KBM-7 (cell line): ENCODE measurements at regions of chr15 and their contacts with region 1.

Region 1: GRCh38 chr15:101294731-101295606 is at the start of gene SNRPA1:
- DNase-seq: peak; percentile 95

Region 2: GRCh38 chr15:101008158-101009139 is 286.5 kb before region 1 on chr15:
- in situ Hi-C with region 1: no loop called
- DNase-seq: peak; percentile 63

Region 3: GRCh38 chr15:101242160-101242998 is 52.6 kb before region 1 on chr15:
- in situ Hi-C with region 1: no loop called
- DNase-seq: peak; percentile 93

Region 4: GRCh38 chr15:101578437-101578894 is 283.5 kb after region 1 on chr15:
- in situ Hi-C with region 1: no loop called
- DNase-seq: peak; percentile 61

Region 5: GRCh38 chr15:101641166-101641764 is 346.3 kb after region 1 on chr15:
- in situ Hi-C with region 1: loop called (anchors 10 kb)
- DNase-seq: peak; percentile 87